Posterior cingulate gyrus (tissue), 11 donors: ENCODE measurements at regions of chrX and their contacts with region 1.

Region 1: DNA sequence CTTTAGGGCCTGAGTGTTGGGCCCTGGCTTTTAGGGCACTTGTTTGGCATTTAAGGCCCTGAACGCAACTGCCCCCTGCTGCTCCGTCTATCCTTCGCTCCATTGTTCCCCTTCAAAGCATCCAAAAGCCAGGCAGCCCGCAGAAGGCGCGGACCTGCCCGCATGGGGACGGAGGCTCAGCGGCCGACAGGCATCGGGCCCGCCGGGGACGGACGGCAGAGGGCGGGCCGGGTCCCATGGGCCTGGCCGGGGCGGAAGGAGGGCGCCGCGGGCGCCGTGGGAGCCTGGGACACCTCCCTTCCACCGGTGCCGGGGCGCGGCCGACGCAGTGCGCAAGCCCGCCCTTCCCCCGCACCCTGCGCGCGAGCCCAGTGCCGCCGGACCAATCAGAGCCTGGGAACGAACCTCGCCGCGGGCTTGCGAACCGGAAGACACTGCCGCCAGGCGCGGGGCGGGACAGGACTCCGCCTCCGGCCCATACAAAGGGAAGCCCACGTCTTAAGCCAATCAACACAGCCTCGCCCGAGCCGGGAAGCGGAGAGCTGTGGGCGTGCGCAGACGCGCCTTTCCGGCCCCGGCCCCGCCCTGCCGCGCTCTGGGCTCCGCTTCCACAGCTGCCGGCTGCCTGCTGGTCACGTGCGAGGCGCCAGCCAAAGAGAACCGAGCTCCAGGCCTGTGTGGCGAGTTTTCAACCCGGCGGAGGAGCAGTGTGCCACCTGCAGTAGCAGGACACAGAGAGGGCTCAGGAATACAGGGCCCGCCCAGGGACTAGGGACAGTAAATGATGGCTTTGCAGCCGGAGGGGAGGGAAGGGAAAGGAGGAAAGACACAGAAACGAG is 2.1 kb upstream of the ARHGAP4 start:
- DNase-seq: peak; percentile 89 to 99 (median 92)

Region 2: GRCh38 chrX:153688922-153689590 is 239.1 kb before region 1 on chrX:
- intact Hi-C with region 1: no loop called
- DNase-seq: peak; percentile 46 to 93 (median 62)

Region 3: DNA sequence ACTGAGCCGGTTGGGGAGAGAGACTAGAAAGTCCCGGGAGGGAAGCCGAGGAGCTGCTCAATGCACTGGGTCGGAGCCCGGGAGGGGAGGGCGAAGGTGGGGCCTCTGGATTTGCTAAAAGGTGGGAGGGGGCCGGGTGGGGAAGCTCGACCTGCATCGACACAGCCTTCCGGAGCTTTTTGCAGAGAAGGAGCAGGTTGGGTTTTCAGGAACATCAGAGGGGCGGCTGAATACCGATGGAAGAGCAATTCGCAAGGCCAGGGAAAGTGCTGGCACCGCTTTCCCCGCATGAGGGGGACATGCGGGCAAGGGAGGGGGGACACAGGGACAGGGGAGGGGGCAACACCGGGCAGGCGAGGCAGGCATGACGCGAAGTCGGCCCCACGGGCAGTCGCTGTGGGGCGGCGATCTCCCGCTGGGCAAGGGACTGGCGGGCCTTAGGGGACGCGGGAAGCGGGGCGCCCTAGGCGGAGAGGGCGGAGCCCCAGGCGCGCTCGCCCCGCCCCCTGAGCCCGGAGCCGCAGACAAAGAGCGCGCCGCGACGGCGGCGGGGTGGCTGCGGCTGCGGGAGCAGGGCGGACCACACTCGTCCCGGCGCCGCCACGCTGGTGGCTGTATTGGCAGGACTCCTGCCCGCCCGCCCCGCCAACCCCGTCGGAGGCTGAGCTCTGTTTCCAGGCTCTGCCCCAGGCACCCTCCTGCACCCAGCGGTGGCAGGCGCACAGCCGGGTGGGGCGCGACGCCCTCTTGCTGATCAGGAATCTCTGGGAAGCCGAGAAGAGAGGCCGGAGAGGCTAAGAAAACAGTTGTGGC is 109.4 kb before region 1 on chrX:
- intact Hi-C with region 1: no loop called
- DNase-seq: peak in 4 of 10 donors; percentile 47 to 87 (median 81)

Region 4: DNA sequence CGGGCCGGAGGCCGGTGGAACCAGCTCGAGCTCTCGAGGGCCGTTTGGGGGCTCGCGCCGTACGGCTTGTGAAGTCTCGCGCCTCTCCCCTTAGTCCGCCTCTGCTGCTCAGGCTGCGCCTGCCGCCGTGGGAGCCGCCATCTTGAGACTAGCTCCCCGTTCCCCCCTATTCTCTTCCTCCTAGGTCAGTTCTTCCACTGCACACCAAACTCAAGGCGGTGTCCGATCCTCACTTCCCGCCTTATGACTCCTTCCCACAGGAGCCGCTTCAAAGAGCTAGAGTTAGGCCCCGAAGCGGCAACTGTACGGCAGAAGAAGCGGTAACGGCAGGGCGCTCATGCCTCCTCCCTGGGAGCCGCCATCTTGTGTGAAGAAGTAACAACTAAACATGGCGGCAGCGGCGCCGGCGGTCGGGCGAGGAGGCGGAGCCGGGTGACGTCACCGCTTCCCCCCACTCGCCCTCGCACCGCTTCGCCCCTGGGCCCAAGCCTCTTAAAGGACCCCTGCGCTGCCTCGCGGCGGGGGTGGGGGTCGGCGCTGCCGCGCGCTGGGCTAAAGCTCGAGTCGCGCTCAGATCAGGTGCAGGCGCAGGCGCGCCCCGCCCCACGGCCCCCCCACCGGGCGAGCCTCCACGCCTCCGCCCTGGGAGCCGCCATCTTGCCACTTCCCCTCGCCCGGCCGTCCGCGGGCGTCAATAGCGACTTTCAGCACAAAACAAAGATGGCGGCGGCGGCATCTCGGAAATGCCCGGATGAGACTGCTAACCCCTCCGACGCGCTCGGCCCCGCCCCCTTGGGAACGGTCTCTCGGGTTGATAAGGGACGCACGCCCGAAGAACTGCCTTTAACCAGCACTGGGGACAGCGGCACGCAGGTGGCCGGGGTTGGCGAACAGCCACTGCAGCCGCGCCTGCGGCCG is 43.6 kb after region 1 on chrX and contains the start of gene HCFC1:
- intact Hi-C with region 1: loop called (anchors 2 kb)
- DNase-seq: peak; percentile 73 to 98 (median 88)

Region 5: DNA sequence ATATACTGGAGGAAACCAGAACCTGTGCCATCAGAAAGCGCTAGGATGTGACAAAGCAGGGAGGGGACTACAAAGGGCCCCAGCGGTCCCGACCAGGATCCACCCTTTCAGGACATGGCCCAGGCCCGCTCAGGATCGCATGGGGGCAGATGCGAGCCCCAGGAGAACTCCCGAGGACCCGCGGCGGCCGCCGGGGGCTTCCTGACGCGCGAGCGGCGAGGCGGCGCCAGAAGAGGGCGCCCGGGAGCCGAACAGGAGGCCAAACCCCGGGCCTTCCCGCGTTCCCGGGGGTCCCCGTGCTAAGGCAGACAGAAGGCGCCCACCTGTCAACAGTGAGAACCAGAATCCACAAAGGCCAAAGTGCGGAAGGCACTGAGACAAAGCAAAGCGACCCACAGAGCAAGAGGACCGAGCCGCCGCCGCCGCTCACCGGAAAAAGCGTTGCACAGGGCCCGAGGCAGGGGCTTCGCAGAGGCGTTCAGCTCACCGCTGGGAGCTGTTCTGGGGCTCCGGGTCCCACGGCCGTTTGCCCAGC is 208.6 kb after region 1 on chrX:
- intact Hi-C with region 1: no loop called
- DNase-seq: peak in 8 of 10 donors; percentile 26 to 93 (median 50)